A673 (cell line): ENCODE measurements at regions of chr20 and their contacts with region 1.

Region 1: GRCh38 chr20:32018269-32019074 is 8.2 kb downstream of the CCM2L start:
- DNase-seq: peak; percentile 49
- H3K4me3 ChIP-seq: peak overlapping the region; percentile 49
- H3K27ac ChIP-seq: no peak overlapping the region
- H3K4me1 ChIP-seq: peaks cover 5% of the 10 kb centered on the region
- H3K27me3 ChIP-seq: peaks cover 45% of the 10 kb centered on the region
- CTCF ChIP-seq: peak; percentile 11; the same call in 1 of the 2 replicates

Region 2: DNA sequence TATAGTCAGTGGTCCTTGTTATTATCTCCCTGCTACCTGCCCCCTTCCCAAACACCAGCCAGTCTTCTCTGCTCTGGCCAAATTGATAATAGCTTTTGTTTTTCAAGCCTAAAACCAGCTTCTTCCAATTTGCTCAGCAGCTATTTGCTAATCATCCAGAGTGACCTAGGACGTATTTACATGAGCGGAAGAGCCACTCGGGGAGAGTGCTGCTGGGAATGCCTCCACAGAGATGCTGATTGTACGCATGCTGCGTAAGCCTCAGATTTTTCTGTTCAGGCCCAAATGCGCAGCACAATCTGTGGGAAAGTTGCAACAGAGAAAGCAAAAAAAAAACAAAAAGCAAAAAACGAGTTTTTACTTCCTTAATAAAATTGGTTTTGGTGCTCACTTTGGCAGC is 437.8 kb before region 1 on chr20:
- CTCF ChIA-PET with region 1: no interaction called
- POLR2A ChIA-PET with region 1: no interaction called
- intact Hi-C with region 1: no loop called
- DNase-seq: no peak
- H3K4me3 ChIP-seq: no peak overlapping the region
- H3K27ac ChIP-seq: no peak overlapping the region
- H3K4me1 ChIP-seq: no peaks in the 10 kb centered on the region
- H3K27me3 ChIP-seq: no peaks in the 10 kb centered on the region
- CTCF ChIP-seq: no peak

Region 3: GRCh38 chr20:31894980-31895675 is 123.3 kb before region 1 on chr20:
- CTCF ChIA-PET with region 1: no interaction called
- POLR2A ChIA-PET with region 1: no interaction called
- intact Hi-C with region 1: no loop called
- DNase-seq: peak; percentile 78
- H3K4me3 ChIP-seq: no peak overlapping the region
- H3K27ac ChIP-seq: no peak overlapping the region
- H3K4me1 ChIP-seq: no peaks in the 10 kb centered on the region
- H3K27me3 ChIP-seq: no peaks in the 10 kb centered on the region
- CTCF ChIP-seq: no peak

Region 4: GRCh38 chr20:31962761-31963160 is 55.7 kb before region 1 on chr20:
- CTCF ChIA-PET with region 1: no interaction called
- POLR2A ChIA-PET with region 1: no interaction called
- intact Hi-C with region 1: loop called (anchors 5 kb)
- DNase-seq: no peak
- H3K4me3 ChIP-seq: no peak overlapping the region
- H3K27ac ChIP-seq: no peak overlapping the region
- H3K4me1 ChIP-seq: no peaks in the 10 kb centered on the region
- H3K27me3 ChIP-seq: peaks cover 86% of the 10 kb centered on the region
- CTCF ChIP-seq: no peak